ENCODE measurements at regions of chr20 and their contacts with region 1.

Region 1: GRCh38 chr20:59571551-59572314 is 32.6 kb upstream of the PHACTR3 start:
- DNase-seq: peak; percentile 93
- H3K27ac ChIP-seq: no peak overlapping the region
- CTCF ChIP-seq: peak; percentile 100

Region 2: GRCh38 chr20:59560588-59561227 is 11.0 kb before region 1 on chr20:
- CTCF ChIA-PET with region 1: interaction called, 46 read pairs
- POLR2A ChIA-PET with region 1: no interaction called
- DNase-seq: peak; percentile 82
- H3K27ac ChIP-seq: no peak overlapping the region
- CTCF ChIP-seq: peak; percentile 65

Region 3: DNA sequence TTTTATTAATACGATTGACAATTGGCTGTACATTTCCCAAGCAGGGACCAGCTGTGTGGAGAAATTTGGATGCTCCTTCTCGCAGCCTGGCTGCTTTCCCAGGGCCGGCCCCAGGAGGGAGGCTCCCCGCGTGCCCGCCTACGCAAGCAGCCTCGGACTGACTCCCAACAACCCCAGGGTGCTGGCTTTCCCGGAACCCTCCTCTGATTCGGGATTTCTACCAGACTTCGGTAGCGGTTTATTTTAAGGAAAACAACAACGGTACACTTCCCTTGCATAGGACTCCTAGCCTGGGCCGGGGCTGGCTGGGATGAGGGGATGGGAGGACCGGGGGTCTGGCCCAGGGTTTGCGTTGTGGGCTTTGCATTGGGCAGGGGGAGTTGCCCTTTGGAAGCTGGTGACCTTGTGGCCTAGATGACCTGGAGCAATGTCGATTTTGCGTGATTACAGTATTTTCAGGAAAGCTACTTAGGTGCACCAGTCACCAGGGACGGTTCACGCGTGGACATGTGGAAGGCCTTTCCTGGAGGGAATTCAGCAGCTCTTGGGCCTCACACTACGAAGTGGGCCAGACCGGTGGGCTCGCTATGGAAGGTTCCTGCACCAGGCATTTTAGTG is 11.8 kb after region 1 on chr20:
- CTCF ChIA-PET with region 1: interaction called, 62 read pairs
- POLR2A ChIA-PET with region 1: no interaction called
- DNase-seq: no peak
- H3K27ac ChIP-seq: no peak overlapping the region
- CTCF ChIP-seq: no peak

Region 4: DNA sequence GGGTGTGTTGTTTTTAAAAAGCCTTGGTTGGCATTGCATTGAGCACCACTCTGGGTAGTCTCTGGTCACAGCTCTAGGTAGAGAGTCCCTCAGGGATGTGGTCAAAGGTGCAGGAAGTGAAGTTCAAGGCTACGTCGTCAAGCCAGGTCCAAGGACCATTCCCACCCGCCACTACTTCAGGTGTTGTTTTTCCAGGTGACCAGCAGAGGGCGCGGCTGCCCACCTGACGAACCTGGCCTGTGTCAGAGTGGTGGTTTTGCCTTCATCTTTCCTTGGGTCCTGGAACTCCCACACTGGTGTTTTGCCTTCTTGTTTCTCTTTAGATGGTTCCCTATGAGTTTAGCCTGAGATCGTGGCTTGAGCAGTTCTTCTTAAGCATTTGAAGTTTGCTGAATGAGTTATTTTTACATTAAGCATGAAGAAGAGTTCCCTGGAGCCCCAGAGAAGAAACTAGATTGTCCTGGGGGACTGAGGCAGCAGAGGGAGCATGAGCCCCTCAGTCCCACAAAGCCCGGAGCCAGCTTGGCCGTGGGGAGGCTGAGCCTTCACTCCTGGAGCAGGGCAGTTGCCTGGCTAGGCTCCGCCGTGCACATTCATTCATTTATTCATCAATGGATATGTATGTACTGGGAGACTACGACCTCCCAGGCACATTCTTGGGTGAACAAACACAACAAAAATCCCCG is 27.0 kb after region 1 on chr20:
- CTCF ChIA-PET with region 1: interaction called, 22 read pairs
- POLR2A ChIA-PET with region 1: no interaction called
- DNase-seq: peak; percentile 87
- H3K27ac ChIP-seq: no peak overlapping the region
- CTCF ChIP-seq: peak; percentile 96

Region 5: DNA sequence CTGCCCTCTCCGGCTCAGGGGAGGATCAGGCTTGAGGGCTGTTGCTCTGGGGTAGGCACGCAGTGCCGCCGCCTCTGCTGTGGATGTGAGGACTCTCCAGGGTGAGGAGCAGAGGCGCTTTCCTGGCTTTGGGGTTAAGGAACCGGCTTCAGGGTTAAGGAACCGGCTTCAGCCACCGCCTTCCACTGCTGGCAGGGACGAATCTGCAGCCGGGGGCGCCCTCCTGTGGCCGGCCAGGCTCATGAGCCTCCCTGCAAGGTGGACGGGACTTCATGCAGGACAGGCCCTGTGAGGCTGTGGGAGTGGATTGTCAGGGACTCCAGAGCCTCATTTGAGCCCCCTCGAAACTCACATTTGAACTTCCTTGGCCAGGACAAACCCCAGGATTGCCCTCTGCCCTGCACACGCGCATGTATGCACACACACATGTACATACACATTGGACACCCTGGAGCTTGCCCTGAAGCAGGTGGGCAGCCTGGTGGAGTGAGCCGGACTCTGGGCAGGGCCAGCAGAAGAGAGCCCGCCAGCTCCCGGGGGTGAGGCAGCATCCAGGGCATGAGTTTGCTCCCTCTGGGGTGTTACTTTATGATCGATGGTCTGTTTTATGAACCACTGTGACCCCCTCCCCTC is 179.4 kb after region 1 on chr20:
- CTCF ChIA-PET with region 1: interaction called, 30 read pairs
- POLR2A ChIA-PET with region 1: interaction called, 5 read pairs
- DNase-seq: peak; percentile 89
- H3K27ac ChIP-seq: no peak overlapping the region
- CTCF ChIP-seq: peak; percentile 83

Measured in RWPE1 (cell line).